ENCODE measurements at regions of chr3 and their contacts with region 1.

Region 1: DNA sequence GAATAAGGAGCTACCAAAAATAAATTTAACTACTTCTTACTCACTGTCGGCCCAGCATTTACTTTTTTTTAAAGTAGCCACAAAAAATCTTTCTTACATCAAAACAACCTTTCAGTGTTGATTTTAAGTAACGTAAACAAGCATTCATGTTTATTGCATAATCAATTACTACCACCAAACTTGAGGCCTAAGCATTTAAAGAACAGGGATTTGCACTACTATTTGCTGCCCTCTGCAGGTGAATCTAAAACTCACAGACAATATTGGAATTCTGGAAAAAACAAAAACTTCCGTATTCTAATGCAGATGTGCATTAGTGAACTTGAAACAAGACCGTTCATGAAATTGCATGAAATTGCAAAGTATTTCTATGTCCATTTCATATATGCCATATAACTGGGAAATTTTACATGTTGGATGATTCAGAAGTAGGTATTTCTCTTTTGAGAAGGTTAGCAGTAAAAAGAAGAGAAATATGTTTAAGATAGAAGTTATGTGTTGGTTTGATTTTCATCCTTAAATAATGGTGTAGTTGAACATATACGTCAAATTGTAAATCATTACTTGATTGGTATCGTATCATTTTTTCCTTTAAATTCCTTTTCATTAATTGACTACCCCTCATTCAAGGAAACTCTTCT is 55.6 kb downstream of the CGGBP1 start:
- DNase-seq: no peak
- H3K4me3 Mint-ChIP-seq: no peak overlapping the region
- H3K27ac Mint-ChIP-seq: no peak overlapping the region
- H3K4me1 Mint-ChIP-seq: peaks cover 28% of the 10 kb centered on the region
- H3K27me3 Mint-ChIP-seq: peaks cover 4% of the 10 kb centered on the region

Region 2: GRCh38 chr3:87298111-87298718 is 705.0 kb before region 1 on chr3:
- intact Hi-C with region 1: loop called (anchors 10 kb)
- DNase-seq: no peak
- H3K4me3 Mint-ChIP-seq: no peak overlapping the region
- H3K27ac Mint-ChIP-seq: no peak overlapping the region
- H3K4me1 Mint-ChIP-seq: peaks cover 6% of the 10 kb centered on the region
- H3K27me3 Mint-ChIP-seq: no peaks in the 10 kb centered on the region

Region 3: DNA sequence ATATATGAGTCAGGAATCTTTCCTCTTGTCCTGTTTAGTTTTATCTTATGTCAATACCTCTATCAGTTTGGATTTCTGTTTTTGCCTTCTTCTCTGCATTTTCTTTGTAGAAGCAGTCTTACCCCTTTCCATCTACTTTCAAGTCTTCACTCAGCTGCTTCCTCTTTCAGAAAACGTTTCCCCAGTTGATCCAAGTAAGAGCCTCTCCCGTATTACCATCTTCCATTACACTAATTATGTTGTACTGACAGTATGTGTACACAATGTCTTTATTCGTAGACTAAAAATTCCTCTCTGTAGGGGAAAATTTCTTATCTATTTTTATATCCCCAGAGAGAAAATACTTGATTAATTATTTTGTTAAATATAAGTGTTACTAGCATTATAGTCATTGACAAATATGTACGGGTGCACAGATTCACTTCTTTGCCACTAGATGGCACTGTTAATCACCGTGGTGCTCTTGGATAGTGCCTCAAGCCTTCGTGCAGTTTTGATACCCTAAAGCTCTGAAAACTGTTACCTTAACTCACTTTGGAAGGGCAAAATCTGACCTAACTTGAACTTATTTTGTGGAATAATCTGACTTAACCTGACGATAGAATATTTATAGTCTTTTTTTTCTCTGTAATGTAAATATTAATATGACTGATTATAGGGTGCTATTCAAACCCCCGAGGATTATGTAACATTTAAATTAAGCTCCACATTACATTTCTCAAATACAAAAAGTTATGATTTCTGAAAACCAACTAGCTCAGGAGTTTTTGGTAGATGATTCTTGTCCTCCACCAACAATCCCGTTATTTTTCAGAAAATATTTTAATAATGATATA is 652.7 kb before region 1 on chr3:
- intact Hi-C with region 1: loop called (anchors 5 kb)
- DNase-seq: no peak
- H3K4me3 Mint-ChIP-seq: no peak overlapping the region
- H3K27ac Mint-ChIP-seq: no peak overlapping the region
- H3K4me1 Mint-ChIP-seq: peaks cover 2% of the 10 kb centered on the region
- H3K27me3 Mint-ChIP-seq: peaks cover 11% of the 10 kb centered on the region

Region 4: DNA sequence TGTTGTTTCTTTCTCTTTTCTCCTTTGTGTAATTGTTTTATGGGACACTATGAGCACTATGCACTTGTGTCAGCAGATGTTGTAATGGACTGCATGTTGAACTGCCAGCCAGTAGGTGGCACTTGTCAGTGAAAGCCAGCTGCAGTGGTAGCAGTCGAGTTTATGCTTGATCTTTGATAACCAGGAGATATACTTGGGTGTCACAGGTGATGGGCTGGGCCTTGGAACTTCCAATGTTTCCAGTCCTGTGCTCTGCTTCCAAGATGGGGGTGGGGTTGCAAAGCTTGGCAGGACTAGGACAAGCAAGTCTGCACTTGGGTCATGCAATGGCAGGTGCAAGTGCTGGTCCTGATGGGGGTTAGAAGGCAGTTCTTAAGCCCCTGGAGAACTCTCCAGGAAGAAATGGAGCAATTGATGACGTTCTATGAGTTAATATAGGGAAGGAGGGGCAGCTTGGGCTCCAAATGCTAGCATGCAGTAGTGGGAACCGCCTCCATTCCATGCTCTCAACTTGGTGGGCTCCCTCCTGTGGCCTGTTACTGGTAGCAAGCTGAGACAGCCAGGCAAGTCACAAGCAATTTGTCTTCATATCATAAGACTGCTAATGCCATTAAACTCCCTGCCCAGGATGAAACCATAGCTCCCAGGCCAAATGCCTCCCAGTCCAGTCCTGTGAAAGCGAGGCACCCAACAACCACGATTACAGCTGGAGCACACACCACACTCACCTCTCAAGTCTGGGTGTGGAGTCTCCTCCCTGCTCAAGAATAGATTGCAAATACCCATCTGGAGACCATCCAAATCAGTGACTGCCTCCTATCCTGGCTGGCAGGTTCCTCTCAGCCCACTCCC is 231.7 kb before region 1 on chr3:
- intact Hi-C with region 1: loop called (anchors 1 kb)
- DNase-seq: no peak
- H3K4me3 Mint-ChIP-seq: no peak overlapping the region
- H3K27ac Mint-ChIP-seq: no peak overlapping the region
- H3K4me1 Mint-ChIP-seq: no peaks in the 10 kb centered on the region
- H3K27me3 Mint-ChIP-seq: peaks cover 18% of the 10 kb centered on the region

Region 5: GRCh38 chr3:87895983-87896382 is 107.3 kb before region 1 on chr3:
- intact Hi-C with region 1: loop called (anchors 5 kb)
- DNase-seq: no peak
- H3K4me3 Mint-ChIP-seq: no peak overlapping the region
- H3K27ac Mint-ChIP-seq: no peak overlapping the region
- H3K4me1 Mint-ChIP-seq: no peaks in the 10 kb centered on the region
- H3K27me3 Mint-ChIP-seq: no peaks in the 10 kb centered on the region

Region 6: DNA sequence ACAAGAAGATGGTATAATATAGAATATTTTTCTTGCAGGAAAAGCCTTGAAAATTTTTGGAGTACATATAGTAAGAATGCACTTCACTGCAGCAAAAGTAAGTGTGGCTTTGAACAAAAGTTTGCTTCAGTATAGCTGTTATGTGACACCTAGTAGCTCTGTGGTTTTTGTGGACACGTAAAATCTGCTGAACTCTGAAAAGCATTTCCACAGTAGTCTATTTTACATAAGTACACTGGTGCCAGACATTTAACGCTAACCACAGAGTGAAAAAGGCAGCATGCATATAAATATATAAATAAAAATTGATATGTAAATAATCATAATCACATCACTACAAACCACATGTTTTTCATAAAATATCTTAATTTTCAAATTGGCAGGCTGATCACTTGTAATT is 15.8 kb after region 1 on chr3:
- intact Hi-C with region 1: loop called (anchors 2 kb)
- DNase-seq: no peak
- H3K4me3 Mint-ChIP-seq: no peak overlapping the region
- H3K27ac Mint-ChIP-seq: no peak overlapping the region
- H3K4me1 Mint-ChIP-seq: peaks cover 31% of the 10 kb centered on the region
- H3K27me3 Mint-ChIP-seq: peaks cover 5% of the 10 kb centered on the region

Region 7: GRCh38 chr3:88113311-88114162 is 110.3 kb after region 1 on chr3:
- intact Hi-C with region 1: loop called (anchors 1 kb)
- DNase-seq: peak; percentile 27
- H3K4me3 Mint-ChIP-seq: no peak overlapping the region
- H3K27ac Mint-ChIP-seq: no peak overlapping the region
- H3K4me1 Mint-ChIP-seq: peaks cover 23% of the 10 kb centered on the region
- H3K27me3 Mint-ChIP-seq: no peaks in the 10 kb centered on the region